MCF 10A (cell line): ENCODE measurements at regions of chr16 and their contacts with region 1.

Region 1: GRCh38 chr16:22232277-22233042 is 26.4 kb downstream of the EEF2K start:
- DNase-seq: peak; percentile 91
- H3K4me3 Mint-ChIP-seq: peak overlapping the region; percentile 55
- H3K27ac Mint-ChIP-seq: peak overlapping the region; percentile 93
- H3K4me1 Mint-ChIP-seq: peaks cover 16% of the 10 kb centered on the region
- H3K27me3 Mint-ChIP-seq: no peaks in the 10 kb centered on the region
- CTCF ChIP-seq: no peak

Region 2: GRCh38 chr16:22198547-22199293 is 33.7 kb before region 1 on chr16:
- CTCF ChIA-PET with region 1: interaction called, 5 read pairs
- POLR2A ChIA-PET with region 1: interaction called, 22 read pairs
- intact Hi-C with region 1: no loop called
- DNase-seq: peak; percentile 35
- H3K4me3 Mint-ChIP-seq: peak overlapping the region; percentile 29
- H3K27ac Mint-ChIP-seq: peak overlapping the region; percentile 86
- H3K4me1 Mint-ChIP-seq: peaks cover 23% of the 10 kb centered on the region
- H3K27me3 Mint-ChIP-seq: no peaks in the 10 kb centered on the region
- CTCF ChIP-seq: no peak